Right cardiac atrium (tissue), 5 donors: ENCODE measurements at regions of chr2 and their contacts with region 1.

Region 1: GRCh38 chr2:166057370-166058164 is 70.3 kb downstream of the SCN1A start:
- DNase-seq: no peak
- ATAC-seq: no peak
- H3K4me3 ChIP-seq: no peak overlapping the region
- H3K27ac ChIP-seq: no peak overlapping the region
- H3K4me1 ChIP-seq: no peaks in the 10 kb centered on the region
- H3K27me3 ChIP-seq: no peaks in the 10 kb centered on the region

Region 2: DNA sequence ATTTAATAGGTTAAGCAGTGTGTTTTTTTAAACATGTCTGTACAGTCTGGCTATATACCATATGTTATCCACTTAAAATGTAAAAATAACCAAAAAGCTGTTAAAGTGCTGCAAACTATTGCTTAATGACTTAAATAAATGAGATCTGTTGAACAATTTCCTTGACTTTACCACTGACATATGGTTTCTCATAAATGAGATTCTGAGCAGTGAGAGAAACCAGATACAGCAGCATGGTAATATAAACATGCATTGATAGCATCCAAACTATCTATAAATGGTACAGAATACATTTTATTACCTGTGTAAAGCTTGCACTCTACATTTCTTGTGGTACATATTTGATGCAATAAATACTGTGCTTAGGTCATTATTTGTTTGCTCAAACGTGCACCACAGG is 67.7 kb before region 1 on chr2:
- intact Hi-C with region 1: no loop called
- DNase-seq: no peak
- ATAC-seq: no peak
- H3K4me3 ChIP-seq: no peak overlapping the region
- H3K27ac ChIP-seq: no peak overlapping the region
- H3K4me1 ChIP-seq: no peaks in the 10 kb centered on the region
- H3K27me3 ChIP-seq: no peaks in the 10 kb centered on the region

Region 3: DNA sequence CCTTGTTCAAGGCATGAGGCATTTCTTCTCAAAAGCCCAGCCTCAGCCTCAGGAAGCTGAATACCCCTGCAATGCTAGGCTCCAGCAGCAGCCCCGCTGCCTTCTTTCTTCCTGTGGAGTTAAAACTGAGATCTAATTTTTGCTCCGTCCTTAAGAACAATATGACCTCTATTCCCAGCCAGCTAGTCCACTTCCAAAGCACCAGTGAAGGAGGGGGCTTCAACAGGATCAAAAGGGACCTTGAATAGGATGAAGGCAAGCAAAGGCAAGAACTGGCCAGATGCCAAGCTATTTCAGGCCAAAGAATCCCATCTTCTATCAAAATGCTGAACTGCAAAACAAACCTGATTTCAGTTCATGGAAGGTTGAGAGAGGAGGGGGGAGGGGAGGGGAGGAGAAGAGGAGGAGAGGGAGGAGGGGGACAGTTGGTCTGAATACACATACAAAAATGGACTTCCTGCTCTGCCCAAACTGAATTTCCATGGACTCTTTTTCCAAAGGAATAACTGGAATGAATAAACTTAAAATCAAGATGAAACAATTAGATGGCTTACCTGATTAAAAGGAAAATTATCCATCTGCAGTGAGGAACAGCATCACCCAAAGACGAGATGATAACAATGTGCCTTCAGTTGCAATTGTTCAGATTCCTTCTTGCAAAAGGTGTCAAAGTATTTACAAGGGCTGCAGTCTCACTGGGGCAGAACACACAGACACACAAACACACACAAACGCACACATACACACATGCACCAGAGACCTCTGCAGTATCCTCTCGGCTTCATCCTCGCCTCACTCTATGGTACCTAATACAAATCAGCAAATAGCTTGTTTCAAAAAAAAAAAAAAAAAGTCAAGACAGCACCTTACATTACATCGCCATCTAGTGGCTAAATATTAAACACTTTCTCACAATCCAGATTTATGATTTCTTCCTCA is 69.9 kb after region 1 on chr2 and contains the start of gene SCN1A:
- intact Hi-C with region 1: loop called in 3 of 4 experiments (anchors 5 to 10 kb)
- DNase-seq: peak in 1 of 3 donors; percentile 39
- ATAC-seq: peak in 1 of 2 donors; percentile 28
- H3K4me3 ChIP-seq: no peak within 1 kb of the TSS
- H3K27ac ChIP-seq: no peak within 1 kb of the TSS
- H3K4me1 ChIP-seq: no peaks in the 10 kb centered on the region
- H3K27me3 ChIP-seq: no peaks in the 10 kb centered on the region
- total RNA-seq, gene SCN1A: 0.06 to 0.59 (median 0.29) TPM

Region 4: GRCh38 chr2:166202778-166203177 is 145.2 kb after region 1 on chr2:
- intact Hi-C with region 1: no loop called
- DNase-seq: no peak
- ATAC-seq: no peak
- H3K4me3 ChIP-seq: no peak overlapping the region
- H3K27ac ChIP-seq: no peak overlapping the region
- H3K4me1 ChIP-seq: no peaks in the 10 kb centered on the region
- H3K27me3 ChIP-seq: no peaks in the 10 kb centered on the region